Activated naive CD4-positive, alpha-beta T cell treated with anti-CD3 and anti-CD28 coated beads for 36 hours (primary cell): ENCODE measurements at regions of chr1 and their contacts with region 1.

Region 1: GRCh38 chr1:20786253-20787028 is 666 bp downstream of the HP1BP3 start:
- DNase-seq: peak; percentile 97
- H3K4me3 Mint-ChIP-seq: peak overlapping the region; percentile 87
- H3K27ac Mint-ChIP-seq: peak overlapping the region; percentile 94
- H3K4me1 Mint-ChIP-seq: peaks cover 32% of the 10 kb centered on the region
- H3K27me3 Mint-ChIP-seq: peaks cover 2% of the 10 kb centered on the region

Region 2: GRCh38 chr1:20661207-20662109 is 125.0 kb before region 1 on chr1 and contains the start of gene DDOST:
- CTCF ChIA-PET with region 1: interaction called, 3 read pairs
- intact Hi-C with region 1: loop called (anchors 1 kb)
- DNase-seq: peak; percentile 97
- H3K4me3 Mint-ChIP-seq: peak within 1 kb of the TSS; percentile 99
- H3K27ac Mint-ChIP-seq: peak within 1 kb of the TSS; percentile 99
- H3K4me1 Mint-ChIP-seq: peaks cover 50% of the 10 kb centered on the region
- H3K27me3 Mint-ChIP-seq: no peaks in the 10 kb centered on the region
- total RNA-seq, gene DDOST: 167 to 169 TPM

Region 3: DNA sequence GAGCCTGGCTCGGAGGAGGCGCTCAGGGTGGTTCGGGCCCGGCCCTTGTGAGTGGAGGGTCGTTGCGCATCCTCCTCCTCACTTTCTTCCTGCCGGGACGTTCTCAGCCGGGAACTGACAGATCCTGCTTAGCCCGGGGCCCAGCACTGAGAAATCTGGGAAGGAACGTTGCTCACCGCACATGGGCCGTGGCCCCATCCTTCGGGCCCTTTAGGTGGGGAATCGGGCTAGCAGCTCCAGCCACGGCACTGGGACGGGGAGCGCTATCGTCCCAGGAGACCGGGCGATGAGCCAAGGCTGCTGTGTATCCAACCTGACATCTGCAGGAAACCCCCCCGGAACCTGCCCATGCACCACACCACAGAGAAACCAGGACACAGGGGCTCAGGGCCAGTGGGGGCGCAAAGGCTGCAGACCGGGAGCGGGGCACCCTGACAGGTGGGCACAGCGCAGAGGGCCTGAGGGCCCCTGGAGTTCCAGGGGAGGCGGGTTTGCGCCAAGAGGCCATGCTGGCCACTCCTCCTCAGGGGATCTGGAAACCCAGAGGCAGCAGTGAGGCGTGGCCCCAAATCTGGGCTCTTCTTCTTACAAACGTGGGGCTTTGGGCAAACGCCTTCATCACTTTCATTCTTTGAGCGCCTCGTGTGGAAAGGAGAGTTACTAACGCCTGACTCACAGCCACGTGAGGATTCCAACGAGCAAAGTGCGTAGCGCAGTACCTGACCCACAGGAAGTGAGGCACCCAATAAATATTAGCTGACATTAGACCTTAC is 53.7 kb before region 1 on chr1 and contains the start of gene SH2D5:
- CTCF ChIA-PET with region 1: no interaction called
- intact Hi-C with region 1: loop called (anchors 1 kb)
- DNase-seq: peak; percentile 88
- H3K4me3 Mint-ChIP-seq: peak within 1 kb of the TSS; percentile 79
- H3K27ac Mint-ChIP-seq: no peak within 1 kb of the TSS
- H3K4me1 Mint-ChIP-seq: peaks cover 10% of the 10 kb centered on the region
- H3K27me3 Mint-ChIP-seq: peaks cover 32% of the 10 kb centered on the region
- total RNA-seq, gene SH2D5: 0.15 to 0.29 TPM

Region 4: GRCh38 chr1:20896871-20897223 is 110.4 kb after region 1 on chr1:
- CTCF ChIA-PET with region 1: no interaction called
- intact Hi-C with region 1: no loop called
- DNase-seq: no peak
- H3K4me3 Mint-ChIP-seq: no peak overlapping the region
- H3K27ac Mint-ChIP-seq: no peak overlapping the region
- H3K4me1 Mint-ChIP-seq: no peaks in the 10 kb centered on the region
- H3K27me3 Mint-ChIP-seq: no peaks in the 10 kb centered on the region

Region 5: DNA sequence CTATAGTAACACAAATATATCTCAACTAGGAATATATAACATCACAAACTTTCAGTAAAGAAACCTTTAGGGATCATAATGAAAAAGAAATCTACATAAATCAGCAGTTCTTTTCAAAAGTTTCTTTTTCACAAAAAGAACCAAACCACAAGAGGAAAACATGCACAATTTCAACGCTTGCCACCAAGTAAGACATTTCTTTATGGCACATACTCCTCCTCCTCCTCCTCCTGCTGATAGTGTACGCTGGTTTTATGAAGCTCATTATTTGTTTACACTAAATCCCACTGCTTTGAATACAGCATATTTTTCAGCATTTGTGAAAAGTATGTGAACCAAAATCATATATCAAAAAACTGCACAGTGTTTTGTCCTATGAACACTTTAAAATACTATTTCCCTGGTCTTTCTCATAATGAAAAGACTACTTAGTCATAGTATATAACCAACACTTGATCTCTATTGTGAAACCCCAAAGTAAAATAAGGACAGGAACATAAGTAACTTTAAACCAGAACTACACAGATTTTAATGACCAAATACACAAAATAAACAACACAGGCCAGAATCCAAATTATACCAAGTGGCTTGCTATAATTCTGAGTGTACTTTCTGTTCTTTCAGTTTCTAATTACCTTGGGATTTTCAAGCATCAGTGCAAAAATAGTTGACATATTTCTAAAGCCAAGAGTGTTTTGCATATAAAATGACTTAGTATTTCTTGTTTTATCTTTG is 206.0 kb after region 1 on chr1:
- CTCF ChIA-PET with region 1: no interaction called
- intact Hi-C with region 1: no loop called
- DNase-seq: no peak
- H3K4me3 Mint-ChIP-seq: no peak overlapping the region
- H3K27ac Mint-ChIP-seq: peak overlapping the region; percentile 66
- H3K4me1 Mint-ChIP-seq: peaks cover 19% of the 10 kb centered on the region
- H3K27me3 Mint-ChIP-seq: no peaks in the 10 kb centered on the region

Region 6: GRCh38 chr1:21200767-21201166 is 414.3 kb after region 1 on chr1:
- CTCF ChIA-PET with region 1: interaction called, 17 read pairs
- intact Hi-C with region 1: loop called (anchors 1 kb)
- DNase-seq: no peak
- H3K4me3 Mint-ChIP-seq: no peak overlapping the region
- H3K27ac Mint-ChIP-seq: no peak overlapping the region
- H3K4me1 Mint-ChIP-seq: no peaks in the 10 kb centered on the region
- H3K27me3 Mint-ChIP-seq: peaks cover 4% of the 10 kb centered on the region

Region 7: DNA sequence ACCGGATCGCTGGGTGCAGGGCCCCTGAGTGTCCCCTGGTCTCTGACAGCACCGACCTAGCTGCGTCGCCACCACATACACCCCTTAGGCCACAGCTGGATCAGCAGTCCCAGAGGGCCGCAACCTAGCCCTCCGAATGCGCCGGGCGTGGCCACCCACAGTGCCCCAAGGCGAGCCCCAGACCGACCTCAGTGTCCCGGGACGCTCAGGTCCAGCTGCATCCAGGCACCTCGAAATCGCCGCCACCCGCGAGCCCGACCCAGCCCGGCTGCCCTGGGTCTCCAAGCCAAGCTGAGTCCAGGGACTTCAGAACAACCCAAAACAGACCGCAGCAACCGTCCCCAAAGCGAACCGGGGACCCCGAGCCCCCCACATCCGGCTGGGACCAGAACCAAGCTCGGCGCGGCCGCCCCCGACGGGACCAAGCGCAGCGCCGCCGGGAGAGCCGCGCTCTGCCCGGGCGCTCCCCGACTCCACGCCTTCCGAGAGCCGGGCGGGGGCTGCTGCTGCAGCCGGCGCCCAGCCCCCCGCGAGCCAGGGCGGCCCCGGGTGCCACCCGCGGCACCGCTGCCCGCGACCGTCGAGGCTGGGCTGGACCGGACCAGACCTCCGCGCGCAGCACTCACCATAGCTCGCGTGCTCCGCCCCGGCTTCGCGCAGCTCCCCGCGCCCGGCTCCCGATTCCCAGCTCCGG is 558.5 kb after region 1 on chr1:
- CTCF ChIA-PET with region 1: no interaction called
- intact Hi-C with region 1: loop called (anchors 2 kb)
- DNase-seq: no peak
- H3K4me3 Mint-ChIP-seq: peak overlapping the region; percentile 92
- H3K27ac Mint-ChIP-seq: peak overlapping the region; percentile 92
- H3K4me1 Mint-ChIP-seq: peaks cover 39% of the 10 kb centered on the region
- H3K27me3 Mint-ChIP-seq: no peaks in the 10 kb centered on the region